ENCODE measurements at regions of chr7 and their contacts with region 1.

Region 1: DNA sequence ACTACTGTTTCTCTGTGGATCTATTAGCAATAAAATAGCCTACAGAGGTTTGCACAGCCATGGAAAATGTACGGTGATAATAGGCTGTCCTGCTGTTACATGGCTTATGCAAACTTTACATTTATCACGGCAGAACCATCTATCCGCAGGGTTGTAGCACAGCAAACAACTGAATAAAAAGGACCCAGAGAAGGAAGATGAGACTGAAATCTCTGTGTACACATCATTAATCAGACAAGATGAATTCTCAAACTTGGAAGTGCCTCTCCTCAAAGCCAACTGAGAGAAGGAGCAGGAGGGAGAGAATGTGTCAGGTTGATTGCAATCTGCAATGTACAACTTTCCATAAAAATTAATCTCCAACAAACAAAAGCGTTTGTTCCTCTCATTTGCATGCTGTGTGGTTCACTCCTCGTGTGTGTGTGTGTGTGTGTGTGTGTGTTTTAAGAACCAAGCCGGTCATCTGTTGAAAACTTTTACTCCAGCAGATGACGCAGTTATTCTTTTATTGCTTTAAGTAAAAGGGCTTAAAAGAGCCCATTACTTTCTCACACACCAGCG is 279.2 kb downstream of the SKAP2 start:
- DNase-seq: no peak
- H3K4me3 ChIP-seq: no peak overlapping the region
- H3K27ac ChIP-seq: no peak overlapping the region
- H3K4me1 ChIP-seq: no peaks in the 10 kb centered on the region
- H3K27me3 ChIP-seq: peaks cover 0 to 20% of the 10 kb centered on the region in 2 donors
- CTCF ChIP-seq: no peak
- POLR2A ChIP-seq: no peak

Region 2: DNA sequence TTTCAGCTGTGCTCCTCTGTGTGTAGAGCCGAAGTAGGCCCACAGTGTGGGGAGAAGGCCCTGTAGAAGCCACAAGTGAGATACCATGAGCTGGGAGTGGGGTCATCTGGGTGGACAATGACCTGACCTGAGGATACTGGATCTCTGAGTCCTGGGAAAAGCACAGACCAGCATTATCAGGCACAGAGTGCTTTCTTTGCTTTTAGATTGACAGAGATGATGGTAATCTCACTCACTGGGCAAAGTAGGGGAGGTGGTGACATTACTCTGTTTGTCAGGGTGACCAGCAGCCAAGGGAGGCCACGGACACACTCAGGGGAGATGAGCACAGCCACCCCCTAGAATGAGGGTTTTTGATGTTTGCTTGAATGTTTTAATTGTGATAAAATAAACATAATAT is 26.7 kb before region 1 on chr7:
- intact Hi-C with region 1: loop called (anchors 2 kb)
- DNase-seq: no peak
- H3K4me3 ChIP-seq: no peak overlapping the region
- H3K27ac ChIP-seq: no peak overlapping the region
- H3K4me1 ChIP-seq: no peaks in the 10 kb centered on the region
- H3K27me3 ChIP-seq: no peaks in the 10 kb centered on the region
- CTCF ChIP-seq: no peak
- POLR2A ChIP-seq: no peak

Region 3: GRCh38 chr7:26937939-26938623 is 352.9 kb after region 1 on chr7:
- intact Hi-C with region 1: no loop called
- DNase-seq: no peak
- H3K4me3 ChIP-seq: no peak overlapping the region
- H3K27ac ChIP-seq: no peak overlapping the region
- H3K4me1 ChIP-seq: no peaks in the 10 kb centered on the region
- H3K27me3 ChIP-seq: no peaks in the 10 kb centered on the region
- CTCF ChIP-seq: no peak
- POLR2A ChIP-seq: no peak